Activated naive CD8-positive, alpha-beta T cell treated with anti-CD3 and anti-CD28 coated beads, Interleukin-2, amount 10 ng/mL, durations not matched to agents 7 days and 5 days (primary cell): ENCODE measurements at regions of chr14 and their contacts with region 1.

Region 1: GRCh38 chr14:21510735-21511657 is at the start of gene METTL3:
- DNase-seq: peak; percentile 83
- ATAC-seq: peak; percentile 100
- H3K4me3 Mint-ChIP-seq: peak within 1 kb of the TSS; percentile 95
- H3K27ac Mint-ChIP-seq: peak within 1 kb of the TSS; percentile 96
- H3K4me1 Mint-ChIP-seq: peaks cover 21% of the 10 kb centered on the region
- H3K27me3 Mint-ChIP-seq: peaks cover 5% of the 10 kb centered on the region
- total RNA-seq, gene METTL3: 89.2 to 90.9 TPM

Region 2: DNA sequence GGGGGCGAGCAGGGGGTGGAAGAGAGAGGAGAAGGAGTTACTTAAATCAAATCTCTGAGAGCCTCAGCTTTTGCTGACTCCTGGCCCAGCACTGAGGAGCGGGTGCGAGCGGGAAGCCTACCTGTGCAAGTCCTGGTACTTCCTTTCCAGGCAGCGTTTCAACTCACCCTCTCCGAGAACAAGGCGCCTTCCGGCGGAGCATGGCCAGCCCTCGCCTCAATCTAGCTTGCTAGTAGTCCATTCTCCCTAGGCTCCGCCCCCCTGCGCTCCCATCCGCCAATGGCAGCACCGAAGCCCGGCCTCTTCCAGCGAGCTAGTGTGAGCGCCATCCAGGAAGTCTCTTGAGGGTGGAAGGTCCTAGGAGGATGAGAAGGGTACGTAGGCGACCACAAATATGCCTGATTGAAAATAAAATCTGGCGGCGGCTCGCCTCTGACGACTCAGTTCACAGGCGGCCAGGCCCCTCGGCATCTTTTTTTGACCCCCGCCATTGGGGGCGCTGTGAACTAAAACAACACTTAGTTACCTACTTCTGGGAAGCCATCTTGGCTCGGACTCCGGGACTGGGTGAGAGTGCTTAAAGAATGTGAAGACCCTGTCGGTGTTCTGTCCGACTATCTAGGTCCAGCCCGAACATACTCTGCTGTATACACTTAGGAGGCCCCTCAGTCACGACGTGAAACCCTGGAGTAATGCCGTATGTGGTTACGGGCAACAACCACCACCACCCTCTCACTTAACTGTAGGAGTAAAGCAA is 54.9 kb before region 1 on chr14 and contains the start of gene CHD8:
- POLR2A ChIA-PET with region 1: interaction called, 13 read pairs
- DNase-seq: peak; percentile 95
- ATAC-seq: peak; percentile 96
- H3K4me3 Mint-ChIP-seq: peak within 1 kb of the TSS; percentile 95
- H3K27ac Mint-ChIP-seq: peak within 1 kb of the TSS; percentile 98
- H3K4me1 Mint-ChIP-seq: peaks cover 22% of the 10 kb centered on the region
- H3K27me3 Mint-ChIP-seq: no peaks in the 10 kb centered on the region
- total RNA-seq, gene CHD8: 128 to 133 TPM

Region 3: GRCh38 chr14:21476925-21477681 is 33.9 kb before region 1 on chr14 and contains the starts of genes RAB2B and TOX4:
- POLR2A ChIA-PET with region 1: interaction called, 30 read pairs
- DNase-seq: peak; percentile 89
- ATAC-seq: peak; percentile 99
- H3K4me3 Mint-ChIP-seq: peak within 1 kb of the TSS; percentile 100
- H3K27ac Mint-ChIP-seq: peak within 1 kb of the TSS; percentile 100
- H3K4me1 Mint-ChIP-seq: peaks cover 24% of the 10 kb centered on the region
- H3K27me3 Mint-ChIP-seq: no peaks in the 10 kb centered on the region
- total RNA-seq, gene RAB2B: 27.3 to 27.5 TPM
- total RNA-seq, gene TOX4: 76.7 to 79.7 TPM

Region 4: GRCh38 chr14:21498553-21499526 is 12.2 kb before region 1 on chr14:
- POLR2A ChIA-PET with region 1: interaction called, 14 read pairs
- DNase-seq: no peak
- ATAC-seq: peak; percentile 59
- H3K4me3 Mint-ChIP-seq: peak overlapping the region; percentile 28
- H3K27ac Mint-ChIP-seq: peak overlapping the region; percentile 73
- H3K4me1 Mint-ChIP-seq: peaks cover 24% of the 10 kb centered on the region
- H3K27me3 Mint-ChIP-seq: no peaks in the 10 kb centered on the region

Region 5: DNA sequence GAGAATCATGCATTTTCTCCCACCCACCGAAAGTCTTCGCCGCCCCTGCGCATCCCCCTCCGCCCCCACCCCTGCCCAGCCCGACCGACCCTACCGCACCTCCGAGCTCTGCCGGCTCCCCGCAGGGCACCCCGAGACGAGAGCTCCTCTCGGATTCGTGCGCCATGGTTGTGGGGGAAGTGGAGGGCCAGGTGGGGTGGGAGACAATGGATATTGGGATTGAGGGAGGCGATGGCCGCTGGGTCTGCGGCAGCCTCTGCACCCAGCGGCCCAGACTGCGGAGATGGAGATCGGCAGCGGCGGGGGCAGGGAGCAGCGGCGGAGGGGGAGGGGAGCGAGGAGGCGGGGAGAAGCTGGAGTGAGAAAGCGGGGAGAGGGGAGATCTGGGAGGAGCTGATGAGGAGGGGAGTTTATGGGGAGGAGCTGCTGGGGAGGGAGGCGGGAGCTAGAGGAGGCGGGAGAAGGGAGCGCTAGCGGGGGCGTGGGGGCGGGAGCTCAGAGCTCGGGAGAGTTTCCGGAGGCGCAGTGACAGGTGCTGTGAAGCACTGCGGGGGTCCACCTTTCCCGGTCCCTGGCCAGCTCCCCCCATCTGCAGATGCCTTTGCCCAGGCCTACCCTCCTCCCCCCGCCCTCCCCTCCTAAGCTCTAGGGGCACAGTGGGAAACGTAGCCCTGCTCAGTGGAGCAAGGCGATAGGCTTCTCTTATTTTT is 15.1 kb after region 1 on chr14 and contains the start of gene SALL2:
- POLR2A ChIA-PET with region 1: interaction called, 48 read pairs
- DNase-seq: peak; percentile 64
- ATAC-seq: peak; percentile 71
- H3K4me3 Mint-ChIP-seq: peak within 1 kb of the TSS; percentile 85
- H3K27ac Mint-ChIP-seq: peak within 1 kb of the TSS; percentile 77
- H3K4me1 Mint-ChIP-seq: peaks cover 9% of the 10 kb centered on the region
- H3K27me3 Mint-ChIP-seq: peaks cover 3% of the 10 kb centered on the region
- total RNA-seq, gene SALL2: 4.0 to 4.4 TPM

Region 6: GRCh38 chr14:21536418-21537089 is 25.6 kb after region 1 on chr14:
- POLR2A ChIA-PET with region 1: no interaction called
- DNase-seq: no peak
- ATAC-seq: no peak
- H3K4me3 Mint-ChIP-seq: peak overlapping the region; percentile 21
- H3K27ac Mint-ChIP-seq: no peak overlapping the region
- H3K4me1 Mint-ChIP-seq: peaks cover 8% of the 10 kb centered on the region
- H3K27me3 Mint-ChIP-seq: peaks cover 44% of the 10 kb centered on the region